ENCODE measurements at regions of chr17 and their contacts with region 1.

Region 1: DNA sequence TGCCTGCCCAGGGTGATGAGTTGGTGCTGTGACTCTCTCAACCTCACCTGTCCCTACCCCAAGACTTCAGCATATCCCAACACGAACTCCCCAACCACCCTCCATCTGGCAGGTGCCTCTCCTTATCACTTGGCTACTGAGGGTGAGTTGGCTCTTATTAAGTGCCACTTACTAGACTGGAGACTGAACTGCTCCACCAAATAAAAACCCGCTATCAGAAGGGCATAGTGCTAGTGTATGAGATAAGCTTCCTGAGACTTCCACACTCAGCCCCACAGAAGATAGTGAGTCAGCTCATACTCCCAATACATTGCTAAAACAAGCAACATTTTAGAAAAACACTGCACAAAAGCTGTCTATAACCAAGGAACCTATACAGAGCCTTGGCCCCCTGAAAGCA is 16.0 kb upstream of the CCL18 start:
- DNase-seq: no peak
- ATAC-seq: no peak
- H3K4me3 ChIP-seq: no peak overlapping the region
- H3K27ac ChIP-seq: no peak overlapping the region
- H3K4me1 ChIP-seq: no peaks in the 10 kb centered on the region
- H3K27me3 ChIP-seq: no peaks in the 10 kb centered on the region; a peak in 1 of 5 replicates
- CTCF ChIP-seq: no peak
- EP300 ChIP-seq: no peak
- POLR2A ChIP-seq: no peak
- RAD21 ChIP-seq: no peak

Region 2: DNA sequence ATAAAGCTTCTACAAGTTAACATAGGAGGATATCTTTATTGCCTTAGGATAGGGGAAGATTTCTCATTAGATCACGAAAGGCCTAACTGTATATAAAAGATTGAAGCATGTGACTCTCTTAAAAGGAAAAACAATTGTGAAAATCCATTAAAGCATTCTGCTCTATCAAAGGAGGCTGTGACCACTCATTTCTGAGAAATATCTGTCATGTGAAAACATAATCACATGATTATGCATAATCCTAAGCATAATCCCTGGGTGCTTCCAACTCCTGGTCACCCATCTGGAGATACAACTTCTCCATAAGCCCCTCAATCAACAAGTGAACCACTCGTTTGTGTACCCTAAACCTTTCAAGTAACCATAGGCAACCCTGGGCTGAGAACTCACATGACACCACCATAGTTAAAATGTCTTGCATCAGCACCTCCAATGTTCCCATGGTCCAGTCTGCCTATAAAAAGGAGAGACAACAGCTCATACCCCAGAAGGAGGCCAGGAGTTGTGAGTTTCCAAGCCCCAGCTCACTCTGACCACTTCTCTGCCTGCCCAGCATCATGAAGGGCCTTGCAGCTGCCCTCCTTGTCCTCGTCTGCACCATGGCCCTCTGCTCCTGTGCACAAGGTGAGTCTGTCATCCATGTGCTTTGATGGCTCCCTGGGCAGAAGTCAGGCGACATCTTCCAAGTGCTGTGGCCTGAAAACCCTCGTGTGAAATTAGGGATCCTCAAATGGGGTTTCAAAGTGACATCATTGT is 15.9 kb after region 1 on chr17 and contains the start of gene CCL18:
- CTCF ChIA-PET with region 1: no interaction called
- POLR2A ChIA-PET with region 1: no interaction called
- in situ Hi-C with region 1: no loop called
- intact Hi-C with region 1: no loop called
- DNase-seq: no peak
- ATAC-seq: no peak
- H3K4me3 ChIP-seq: no peak within 1 kb of the TSS
- H3K27ac ChIP-seq: no peak within 1 kb of the TSS
- H3K4me1 ChIP-seq: no peaks in the 10 kb centered on the region
- H3K27me3 ChIP-seq: 0 out of 5 replicates have a peak, but pooled peaks cover 0 to 4% of the 10 kb centered on the region in 2 experiments
- CTCF ChIP-seq: no peak
- EP300 ChIP-seq: no peak
- POLR2A ChIP-seq: no peak
- RAD21 ChIP-seq: no peak
- total RNA-seq, gene CCL18: not detected in 2 replicates

Region 3: GRCh38 chr17:36107660-36108059 is 59.6 kb after region 1 on chr17:
- CTCF ChIA-PET with region 1: no interaction called
- POLR2A ChIA-PET with region 1: no interaction called
- in situ Hi-C with region 1: loop called (anchors 10 kb)
- intact Hi-C with region 1: no loop called
- DNase-seq: no peak
- ATAC-seq: no peak
- H3K4me3 ChIP-seq: no peak overlapping the region
- H3K27ac ChIP-seq: no peak overlapping the region
- H3K4me1 ChIP-seq: no peaks in the 10 kb centered on the region
- H3K27me3 ChIP-seq: no peaks in the 10 kb centered on the region
- CTCF ChIP-seq: no peak
- EP300 ChIP-seq: no peak
- POLR2A ChIP-seq: no peak
- RAD21 ChIP-seq: no peak